AG04449 (cell line): ENCODE measurements at regions of chr4 and their contacts with region 1.

Region 1: GRCh38 chr4:3106339-3107186 is 32.1 kb downstream of the HTT start:
- DNase-seq: no peak
- H3K4me3 ChIP-seq: no peak overlapping the region
- CTCF ChIP-seq: peak; percentile 99

Region 2: GRCh38 chr4:2712261-2712842 is 394.2 kb before region 1 on chr4:
- CTCF ChIA-PET with region 1: no interaction called
- POLR2A ChIA-PET with region 1: no interaction called
- DNase-seq: no peak
- H3K4me3 ChIP-seq: no peak overlapping the region
- CTCF ChIP-seq: peak; percentile 37

Region 3: DNA sequence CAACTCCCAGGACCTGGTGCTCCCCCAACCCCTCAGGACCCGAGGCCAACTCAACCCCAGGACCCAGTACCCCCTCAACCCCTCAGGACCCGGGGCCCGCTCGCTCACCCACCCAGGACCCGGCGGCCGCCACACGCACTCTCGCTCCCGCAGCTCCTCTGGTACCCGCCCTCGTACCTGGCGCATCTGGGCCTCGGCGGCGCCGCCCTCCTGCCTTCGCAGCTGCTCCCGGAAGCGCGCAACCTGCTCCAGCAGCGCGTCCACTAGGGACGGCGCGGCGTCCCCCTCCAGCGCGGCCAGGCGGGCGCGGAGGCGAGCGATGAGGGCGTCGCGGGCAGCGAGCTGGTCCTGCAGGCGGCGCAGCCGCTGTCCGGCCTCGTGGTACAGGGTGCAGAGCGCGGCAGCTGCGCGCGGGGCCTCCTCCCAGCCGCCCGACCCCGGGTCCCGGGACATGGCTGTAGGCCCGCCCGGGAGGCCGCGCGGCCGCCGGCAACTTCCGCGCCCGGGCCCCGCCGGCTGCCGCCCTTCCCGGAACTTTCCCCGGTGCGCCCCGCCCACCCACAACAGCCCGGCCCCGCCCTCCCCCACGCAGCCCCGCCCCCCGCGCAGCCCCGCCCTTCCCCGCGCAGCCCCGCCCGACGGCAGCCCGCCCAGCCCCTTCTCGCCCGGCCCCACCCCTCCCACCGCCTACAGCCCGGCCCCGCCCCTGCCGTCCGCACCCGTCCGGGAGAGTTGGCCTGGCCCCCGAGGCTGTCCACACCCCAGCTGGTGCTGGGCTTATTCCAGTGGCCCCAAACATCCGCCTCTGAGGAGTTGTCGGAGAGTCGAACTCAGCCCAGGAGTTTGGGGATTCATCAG is 350.5 kb before region 1 on chr4 and contains the start of gene TNIP2:
- CTCF ChIA-PET with region 1: no interaction called
- POLR2A ChIA-PET with region 1: no interaction called
- DNase-seq: no peak
- H3K4me3 ChIP-seq: peak within 1 kb of the TSS; percentile 83
- CTCF ChIP-seq: peak; percentile 26

Region 4: DNA sequence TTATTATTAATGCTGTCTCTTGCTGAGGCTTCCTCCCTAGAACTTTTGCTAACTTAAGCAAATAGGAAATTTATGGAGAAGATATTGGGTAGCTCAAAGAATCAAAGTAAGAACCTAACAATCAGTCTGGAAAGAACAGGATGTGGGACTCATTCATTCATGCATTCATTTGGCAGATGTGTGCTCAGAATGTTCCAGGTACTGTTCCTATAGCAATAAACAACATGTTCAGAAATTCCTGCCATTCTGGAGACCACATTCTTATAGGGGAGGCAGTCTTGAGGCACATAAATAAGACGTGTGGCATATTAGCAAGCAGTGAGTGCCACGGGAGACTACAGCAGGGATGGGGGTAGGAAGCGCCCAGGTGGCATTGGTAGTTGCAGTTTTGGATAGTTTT is 138.2 kb before region 1 on chr4:
- CTCF ChIA-PET with region 1: no interaction called
- POLR2A ChIA-PET with region 1: no interaction called
- DNase-seq: no peak
- H3K4me3 ChIP-seq: no peak overlapping the region
- CTCF ChIP-seq: no peak

Region 5: DNA sequence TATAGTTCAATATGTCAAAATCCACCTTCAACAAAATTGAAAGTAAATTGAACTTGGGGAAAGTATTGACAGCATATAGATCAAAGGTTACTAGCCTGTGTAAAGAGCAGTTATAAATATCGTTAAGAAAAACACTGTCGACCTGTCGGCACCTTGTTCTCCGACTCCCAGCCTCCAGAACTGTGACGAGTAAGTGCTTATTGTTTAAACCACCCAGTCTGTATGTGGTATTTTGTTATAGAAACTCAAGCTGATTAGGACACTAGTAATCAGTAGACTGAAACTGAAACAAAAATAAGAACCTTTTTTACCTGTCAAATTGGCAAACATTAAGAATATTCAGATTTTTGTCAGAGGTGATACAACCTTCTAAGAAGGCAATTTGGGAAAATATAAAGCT is 15.1 kb before region 1 on chr4:
- CTCF ChIA-PET with region 1: interaction called, 26 read pairs
- POLR2A ChIA-PET with region 1: no interaction called
- DNase-seq: no peak
- H3K4me3 ChIP-seq: no peak overlapping the region
- CTCF ChIP-seq: no peak

Region 6: DNA sequence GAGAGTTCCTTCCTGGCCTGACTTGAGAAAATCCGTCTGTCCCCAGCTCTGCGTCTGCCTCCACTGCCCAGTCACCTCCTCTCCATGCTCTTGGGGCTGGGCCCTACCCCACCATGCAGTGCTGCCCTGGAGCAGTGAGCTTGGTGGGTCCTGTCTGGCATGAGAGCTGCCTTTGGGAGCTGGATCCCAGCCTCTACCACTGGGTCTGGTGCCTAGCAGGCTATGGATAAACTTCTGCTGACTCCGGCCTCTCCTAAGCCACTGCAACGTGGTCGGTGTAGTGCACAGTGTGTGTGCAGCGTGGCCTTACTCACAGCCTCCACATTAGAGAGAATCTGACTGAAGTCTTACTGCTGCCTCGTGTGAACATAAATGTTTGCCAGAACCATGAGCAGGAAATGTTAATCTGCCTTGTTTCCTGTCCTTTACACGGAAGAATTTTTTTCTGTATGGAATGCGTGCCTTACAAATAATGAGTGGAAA is 15.6 kb after region 1 on chr4:
- CTCF ChIA-PET with region 1: interaction called, 207 read pairs
- POLR2A ChIA-PET with region 1: interaction called, 6 read pairs
- DNase-seq: no peak
- H3K4me3 ChIP-seq: no peak overlapping the region
- CTCF ChIP-seq: no peak

Region 7: DNA sequence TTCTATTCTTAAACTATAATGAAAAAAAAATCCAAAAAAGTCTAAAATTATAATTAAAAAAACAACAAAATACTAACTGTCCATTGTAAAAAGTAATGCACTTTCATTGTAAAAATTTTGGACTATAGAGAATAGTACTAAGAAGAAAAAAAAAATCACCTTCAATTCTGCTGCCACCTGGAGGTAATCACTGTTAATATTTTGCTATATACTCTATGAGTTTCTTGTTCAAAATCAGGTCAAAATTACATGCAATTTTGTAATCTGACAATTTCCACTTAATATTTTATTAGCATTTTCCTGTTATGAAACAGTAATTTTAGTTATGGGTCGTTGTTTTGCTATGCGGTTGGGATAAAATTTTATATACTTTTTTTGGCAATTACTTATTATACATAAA is 29.9 kb after region 1 on chr4:
- CTCF ChIA-PET with region 1: interaction called, 207 read pairs
- POLR2A ChIA-PET with region 1: no interaction called
- DNase-seq: no peak
- H3K4me3 ChIP-seq: no peak overlapping the region
- CTCF ChIP-seq: no peak

Region 8: DNA sequence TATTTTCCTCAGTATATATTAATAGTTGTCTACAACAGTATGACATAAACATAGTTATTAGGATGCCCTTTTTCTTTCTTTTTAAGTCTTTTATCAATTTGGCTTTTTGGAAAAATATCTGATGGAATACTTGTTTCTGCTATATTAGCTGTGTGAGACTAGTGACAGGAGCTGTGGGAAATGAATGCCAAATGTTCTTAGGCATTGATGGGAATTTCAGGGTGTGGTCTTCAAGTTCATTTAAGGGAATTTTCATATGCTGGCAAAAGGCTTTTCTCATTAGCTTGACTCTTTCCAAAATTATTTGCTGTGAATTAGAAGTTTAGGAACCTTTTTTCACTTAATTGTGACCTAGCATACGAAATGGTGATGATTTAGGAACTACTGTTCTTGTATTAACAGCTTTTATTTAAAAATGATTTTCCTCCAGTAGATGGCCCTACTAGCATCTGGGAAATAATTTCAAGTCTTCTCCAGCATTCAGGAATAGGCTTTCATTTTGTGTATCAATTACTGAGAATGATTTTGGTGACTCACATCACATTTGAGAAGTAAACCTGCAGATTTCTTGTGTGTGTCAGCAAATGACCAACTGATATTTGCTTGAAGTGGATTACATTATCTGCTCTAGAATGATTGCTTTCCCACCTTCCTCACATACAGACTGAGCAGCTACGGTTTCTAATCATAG is 38.8 kb after region 1 on chr4:
- CTCF ChIA-PET with region 1: interaction called, 11 read pairs
- POLR2A ChIA-PET with region 1: no interaction called
- DNase-seq: no peak
- H3K4me3 ChIP-seq: no peak overlapping the region
- CTCF ChIP-seq: no peak

Region 9: GRCh38 chr4:3193531-3194203 is 87.1 kb after region 1 on chr4:
- CTCF ChIA-PET with region 1: interaction called, 11 read pairs
- POLR2A ChIA-PET with region 1: no interaction called
- DNase-seq: no peak
- H3K4me3 ChIP-seq: no peak overlapping the region
- CTCF ChIP-seq: peak; percentile 20

Region 10: GRCh38 chr4:3201718-3202702 is 95.4 kb after region 1 on chr4:
- CTCF ChIA-PET with region 1: interaction called, 12 read pairs
- POLR2A ChIA-PET with region 1: no interaction called
- DNase-seq: no peak
- H3K4me3 ChIP-seq: no peak overlapping the region
- CTCF ChIP-seq: no peak